Body of pancreas (tissue), 4 donors: ENCODE measurements at regions of chr11 and their contacts with region 1.

Region 1: DNA sequence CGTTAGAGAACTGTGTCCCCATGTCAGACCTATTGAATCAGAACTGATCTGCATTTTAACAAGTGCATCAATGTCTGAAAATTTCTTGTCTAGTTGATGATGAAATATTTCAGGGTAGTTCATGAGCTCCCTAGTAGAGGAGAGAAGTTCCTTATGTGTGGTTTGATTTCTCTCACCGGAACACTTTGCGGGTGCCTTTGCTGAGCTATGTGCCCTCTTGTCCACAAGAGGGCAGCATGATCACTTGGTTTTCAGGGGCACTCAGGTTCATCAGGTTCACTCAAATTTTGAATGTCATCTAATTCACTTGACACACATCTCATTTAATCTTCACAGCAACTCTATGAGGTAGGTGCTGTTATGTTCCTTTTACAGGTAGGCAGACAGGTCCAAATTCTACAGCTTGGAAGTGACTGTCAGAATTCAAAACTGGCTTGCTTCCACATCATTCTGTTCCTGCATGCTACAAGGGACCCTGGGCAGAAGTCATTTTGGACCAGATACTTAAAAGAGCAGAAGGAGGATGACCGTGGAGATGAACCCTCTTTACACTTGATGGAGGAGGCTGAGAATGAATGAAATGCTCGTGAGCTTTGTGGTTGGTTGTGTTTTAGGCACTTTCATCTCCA is 55.6 kb downstream of the P4HA3 start:
- DNase-seq: peak; percentile 55 to 66 (median 58)
- ATAC-seq: peak; percentile 75
- H3K4me3 ChIP-seq: no peak overlapping the region
- H3K27ac ChIP-seq: no peak overlapping the region
- H3K4me1 ChIP-seq: no peaks in the 10 kb centered on the region
- H3K27me3 ChIP-seq: no peaks in the 10 kb centered on the region
- CTCF ChIP-seq: peak; percentile 74 to 87 (median 83)
- POLR2A ChIP-seq: no peak

Region 2: GRCh38 chr11:74570266-74571061 is 314.6 kb after region 1 on chr11:
- intact Hi-C with region 1: loop called (anchors 10 kb)
- DNase-seq: peak; percentile 67 to 79 (median 71)
- ATAC-seq: peak; percentile 86
- H3K4me3 ChIP-seq: no peak overlapping the region
- H3K27ac ChIP-seq: peak overlapping the region in 3 of 4 donors; percentile 63 to 79 (median 63)
- H3K4me1 ChIP-seq: peaks cover 59% of the 10 kb centered on the region
- H3K27me3 ChIP-seq: no peaks in the 10 kb centered on the region
- CTCF ChIP-seq: peak; percentile 44 to 88 (median 83)
- POLR2A ChIP-seq: no peak